PC-3 (cell line): ENCODE measurements at regions of chr12 and their contacts with region 1.

Region 1: DNA sequence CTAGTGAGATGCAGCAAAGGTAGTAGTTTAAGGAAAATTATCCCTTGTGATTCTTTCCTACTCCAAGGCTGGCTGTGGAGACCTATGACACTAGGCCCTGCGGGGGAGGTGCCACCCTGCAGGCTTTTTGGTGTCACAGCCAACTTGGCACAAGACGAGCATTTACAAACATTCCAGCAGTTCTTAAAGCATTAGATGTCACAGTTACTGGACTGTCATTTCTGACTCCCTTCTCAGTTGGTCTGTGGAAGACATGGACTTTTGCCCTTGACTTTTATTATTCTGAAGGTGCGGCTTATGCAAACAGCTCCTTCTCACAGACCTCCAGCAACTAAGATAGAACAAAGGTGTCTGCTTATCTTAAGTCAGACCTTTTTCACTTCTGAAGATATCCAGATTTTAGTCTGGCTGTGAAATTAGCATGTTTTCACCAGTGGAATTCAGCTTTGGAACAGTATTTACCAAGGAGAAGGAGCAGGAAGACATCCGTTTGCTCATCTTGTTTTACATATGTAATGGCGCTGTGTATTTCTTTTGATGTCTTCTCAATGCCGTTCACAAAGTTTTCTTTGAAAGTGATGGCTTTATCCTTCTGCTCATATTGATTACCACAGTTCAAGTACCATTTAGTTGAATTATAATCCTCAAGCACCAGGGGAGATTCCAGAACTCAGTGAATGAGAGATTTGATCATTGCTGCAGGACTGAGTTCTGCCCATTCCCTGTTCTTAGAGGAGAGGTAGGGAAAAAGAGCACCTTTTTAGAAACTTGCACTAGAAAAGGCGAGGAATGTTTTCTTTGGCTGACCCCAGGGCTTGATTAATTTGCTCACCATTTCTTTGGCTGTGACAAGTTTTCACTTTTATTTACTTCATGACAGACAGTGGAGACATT is 18.0 kb downstream of the SRGAP1 start:
- DNase-seq: peak; percentile 96
- ATAC-seq: peak; percentile 87
- H3K4me3 ChIP-seq: peak overlapping the region; percentile 53
- H3K27ac ChIP-seq: peak overlapping the region; percentile 89
- H3K4me1 ChIP-seq: peaks cover 52% of the 10 kb centered on the region
- H3K27me3 ChIP-seq: no peaks in the 10 kb centered on the region
- CTCF ChIP-seq: no peak

Region 2: GRCh38 chr12:63978519-63978918 is 116.1 kb after region 1 on chr12:
- CTCF ChIA-PET with region 1: no interaction called
- POLR2A ChIA-PET with region 1: no interaction called
- intact Hi-C with region 1: loop called (anchors 1 kb)
- DNase-seq: peak; percentile 96
- ATAC-seq: peak; percentile 79
- H3K4me3 ChIP-seq: no peak overlapping the region
- H3K27ac ChIP-seq: peak overlapping the region; percentile 63
- H3K4me1 ChIP-seq: peaks cover 54% of the 10 kb centered on the region
- H3K27me3 ChIP-seq: no peaks in the 10 kb centered on the region
- CTCF ChIP-seq: no peak

Region 3: DNA sequence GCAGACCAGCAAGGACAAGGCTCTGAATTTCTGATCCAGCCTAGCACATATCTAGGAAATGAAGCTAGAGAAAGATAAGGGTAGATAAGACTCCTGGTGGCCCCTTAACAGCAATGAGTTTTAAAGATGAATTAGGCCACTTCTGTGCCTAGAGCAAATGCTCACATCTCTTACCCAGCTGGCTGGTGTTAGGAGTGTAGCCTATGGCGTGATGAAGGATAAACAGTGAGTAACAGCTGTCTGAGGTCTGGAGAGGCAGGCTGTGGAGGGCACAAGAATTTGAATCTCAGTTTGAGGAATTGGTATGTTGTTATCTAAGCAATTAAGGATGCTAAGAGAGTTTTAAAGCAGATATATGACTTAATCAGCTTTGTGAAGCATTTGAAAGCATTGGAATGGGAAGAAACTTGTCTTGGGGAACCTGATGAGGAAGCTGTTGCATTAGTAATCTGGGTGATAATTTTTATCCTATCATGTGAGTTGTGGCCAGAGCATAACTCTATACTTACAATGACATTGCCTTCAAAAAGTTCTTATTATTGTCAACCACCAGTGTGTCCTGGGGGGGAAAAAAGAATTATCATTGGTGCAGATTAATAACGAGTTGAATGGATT is 143.9 kb after region 1 on chr12:
- CTCF ChIA-PET with region 1: no interaction called
- POLR2A ChIA-PET with region 1: no interaction called
- intact Hi-C with region 1: no loop called
- DNase-seq: no peak
- ATAC-seq: no peak
- H3K4me3 ChIP-seq: no peak overlapping the region
- H3K27ac ChIP-seq: no peak overlapping the region
- H3K4me1 ChIP-seq: peaks cover 42% of the 10 kb centered on the region
- H3K27me3 ChIP-seq: no peaks in the 10 kb centered on the region
- CTCF ChIP-seq: no peak

Region 4: GRCh38 chr12:64088431-64089349 is 226.2 kb after region 1 on chr12:
- CTCF ChIA-PET with region 1: no interaction called
- POLR2A ChIA-PET with region 1: no interaction called
- intact Hi-C with region 1: loop called (anchors 5 kb)
- DNase-seq: peak; percentile 98
- ATAC-seq: peak; percentile 96
- H3K4me3 ChIP-seq: peak overlapping the region; percentile 39
- H3K27ac ChIP-seq: peak overlapping the region; percentile 78
- H3K4me1 ChIP-seq: peaks cover 42% of the 10 kb centered on the region
- H3K27me3 ChIP-seq: no peaks in the 10 kb centered on the region
- CTCF ChIP-seq: no peak